ENCODE measurements at regions of chr2 and their contacts with region 1.

Region 1: DNA sequence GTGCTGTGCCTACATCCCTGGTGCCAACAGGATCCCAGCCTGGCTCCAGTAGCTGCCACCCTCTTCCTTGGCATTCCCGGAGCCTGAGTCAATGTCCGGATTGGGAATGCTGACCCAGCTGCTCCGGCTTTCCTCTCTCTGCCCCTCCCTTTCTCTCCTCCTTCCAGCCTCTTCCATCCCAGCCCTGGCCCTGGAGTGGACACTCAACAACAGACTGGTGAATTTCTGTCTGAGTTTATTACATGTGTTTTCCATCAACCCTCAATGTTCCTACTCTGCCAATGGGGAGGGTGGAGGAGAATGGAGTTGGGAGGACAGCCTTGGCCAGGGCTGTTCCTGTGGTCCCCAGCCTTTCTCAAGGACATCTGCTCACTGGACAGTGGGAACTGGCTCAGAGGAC is 917 bp upstream of the PRKAG3 start:
- DNase-seq: peak; percentile 86 to 88
- ATAC-seq: peak; percentile 82
- H3K4me3 ChIP-seq: no peak overlapping the region
- H3K27ac ChIP-seq: peak overlapping the region; percentile 68 to 86
- H3K4me1 ChIP-seq: peaks cover 4 to 5% of the 10 kb centered on the region in 2 donors
- H3K27me3 ChIP-seq: no peaks in the 10 kb centered on the region

Region 2: DNA sequence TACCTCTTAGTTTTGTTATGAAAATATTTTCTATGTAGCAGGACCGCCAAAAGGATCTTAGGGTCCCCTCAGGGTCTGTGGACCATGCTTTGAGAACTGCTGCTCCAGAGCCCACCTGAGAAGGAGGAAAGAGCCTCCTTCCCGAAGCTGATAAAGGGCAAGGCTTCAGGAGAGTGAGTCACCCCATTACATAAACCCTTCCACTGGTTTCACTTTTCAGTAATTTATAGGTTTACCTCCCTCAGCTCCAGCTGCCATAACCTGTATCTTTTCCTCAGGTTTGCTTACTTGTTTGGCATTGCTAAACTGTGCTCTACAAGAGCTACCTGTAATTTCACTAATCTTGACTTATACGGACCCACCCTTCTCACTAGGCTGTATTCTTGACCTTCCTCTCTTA is 115.3 kb before region 1 on chr2:
- intact Hi-C with region 1: loop called in 1 of 2 experiments (anchors 5 kb)
- DNase-seq: no peak
- ATAC-seq: no peak
- H3K4me3 ChIP-seq: no peak overlapping the region
- H3K27ac ChIP-seq: no peak overlapping the region
- H3K4me1 ChIP-seq: no peaks in the 10 kb centered on the region
- H3K27me3 ChIP-seq: no peaks in the 10 kb centered on the region

Region 3: DNA sequence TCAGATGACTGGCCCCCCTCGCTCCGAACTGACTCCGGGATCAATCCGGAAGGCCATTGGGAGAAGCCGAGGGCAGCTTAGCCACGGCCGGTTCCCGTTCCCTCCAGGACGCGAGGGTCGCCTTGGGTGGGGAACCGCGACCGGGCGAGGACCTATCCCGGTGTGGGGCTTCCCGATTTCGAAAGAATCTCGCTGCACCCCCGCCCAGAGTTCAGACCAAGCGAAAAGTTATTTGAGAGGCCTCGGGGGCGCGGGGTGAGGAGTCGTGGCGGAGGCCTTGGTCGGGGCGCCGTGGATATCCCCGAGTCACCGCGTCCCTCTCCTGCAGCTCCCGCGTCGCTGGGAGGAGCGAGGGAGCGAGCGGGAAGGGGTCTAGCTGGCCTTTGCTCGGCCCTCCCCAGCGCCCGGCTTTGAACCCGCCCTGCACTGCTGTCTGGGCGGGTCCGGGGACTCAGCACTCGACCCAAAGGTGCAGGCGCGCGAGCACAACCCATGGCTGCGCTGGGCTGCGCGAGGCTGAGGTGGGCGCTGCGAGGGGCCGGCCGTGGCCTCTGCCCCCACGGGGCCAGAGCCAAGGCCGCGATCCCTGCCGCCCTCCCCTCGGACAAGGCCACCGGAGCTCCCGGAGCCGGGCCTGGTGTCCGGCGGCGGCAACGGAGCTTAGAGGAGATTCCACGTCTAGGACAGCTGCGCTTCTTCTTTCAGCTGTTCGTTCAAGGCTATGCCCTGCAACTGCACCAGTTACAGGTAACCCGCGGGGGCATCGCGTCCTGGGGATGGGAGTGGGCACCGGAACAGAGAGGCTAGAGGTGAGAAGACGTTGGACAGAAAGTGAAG is 50.6 kb before region 1 on chr2 and contains the start of gene CYP27A1:
- intact Hi-C with region 1: loop called in 1 of 2 experiments (anchors 10 kb)
- DNase-seq: peak; percentile 79 to 83
- ATAC-seq: peak; percentile 92
- H3K4me3 ChIP-seq: peak within 1 kb of the TSS; percentile 64 to 73
- H3K27ac ChIP-seq: peak within 1 kb of the TSS; percentile 74 to 75
- H3K4me1 ChIP-seq: peaks cover 0 to 3% of the 10 kb centered on the region in 2 donors
- H3K27me3 ChIP-seq: no peaks in the 10 kb centered on the region
- total RNA-seq, gene CYP27A1: 31.9 to 50.6 TPM

Region 4: DNA sequence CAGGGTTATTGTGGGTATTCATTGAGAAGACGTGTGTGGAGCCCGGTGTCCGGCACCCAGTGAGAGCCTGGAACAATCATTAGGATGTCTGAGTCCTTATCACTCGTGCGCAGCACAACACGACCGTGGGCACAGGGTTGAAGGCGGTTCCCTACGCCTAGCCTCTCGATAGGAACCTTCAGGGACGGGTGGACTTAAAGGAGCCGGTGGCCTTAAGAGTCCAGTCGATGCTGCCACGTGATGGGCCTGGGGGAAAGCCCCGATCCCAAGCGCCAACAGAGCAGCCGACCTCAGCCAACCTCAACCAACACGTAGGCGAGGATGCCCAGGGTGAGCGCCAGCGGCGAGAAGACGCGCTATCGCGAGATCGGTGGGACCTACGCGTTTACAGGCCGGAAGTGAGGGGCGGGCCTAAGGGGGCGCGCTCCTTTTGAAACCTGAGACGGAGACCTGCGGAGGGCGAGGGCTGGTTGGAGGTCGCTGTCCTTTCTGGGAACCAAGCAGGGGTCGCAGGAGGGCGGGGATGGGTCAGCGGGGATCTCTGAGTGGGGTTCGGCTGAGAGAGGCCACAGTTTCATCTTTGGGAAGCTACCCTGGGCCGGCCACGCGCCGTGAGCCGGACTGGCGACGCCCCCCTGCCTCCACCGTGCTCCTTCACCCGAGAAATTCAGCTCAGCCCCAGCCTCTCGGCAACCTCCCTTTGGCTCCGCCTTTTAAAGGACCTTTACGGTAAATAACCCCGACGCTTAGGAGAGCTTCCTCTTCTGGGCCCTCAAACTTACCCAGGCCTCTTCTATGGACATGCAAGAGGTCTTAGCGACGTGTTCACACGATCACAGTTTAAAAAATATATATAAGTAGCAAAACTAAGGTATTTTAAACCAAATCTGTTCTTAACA is 76.5 kb after region 1 on chr2:
- intact Hi-C with region 1: no loop called
- DNase-seq: peak; percentile 95 to 98
- ATAC-seq: peak; percentile 96
- H3K4me3 ChIP-seq: peak overlapping the region; percentile 15 to 63
- H3K27ac ChIP-seq: no peak overlapping the region
- H3K4me1 ChIP-seq: no peaks in the 10 kb centered on the region
- H3K27me3 ChIP-seq: no peaks in the 10 kb centered on the region